ENCODE measurements at regions of chr12 and their contacts with region 1.

Region 1: GRCh38 chr12:21683115-21683514 is 25.5 kb upstream of the LDHB start:
- DNase-seq: no peak
- H3K4me3 ChIP-seq: no peak overlapping the region
- H3K27ac ChIP-seq: no peak overlapping the region
- H3K4me1 ChIP-seq: no peaks in the 10 kb centered on the region
- H3K27me3 ChIP-seq: no peaks in the 10 kb centered on the region
- CTCF ChIP-seq: no peak
- POLR2A ChIP-seq: no peak

Region 2: DNA sequence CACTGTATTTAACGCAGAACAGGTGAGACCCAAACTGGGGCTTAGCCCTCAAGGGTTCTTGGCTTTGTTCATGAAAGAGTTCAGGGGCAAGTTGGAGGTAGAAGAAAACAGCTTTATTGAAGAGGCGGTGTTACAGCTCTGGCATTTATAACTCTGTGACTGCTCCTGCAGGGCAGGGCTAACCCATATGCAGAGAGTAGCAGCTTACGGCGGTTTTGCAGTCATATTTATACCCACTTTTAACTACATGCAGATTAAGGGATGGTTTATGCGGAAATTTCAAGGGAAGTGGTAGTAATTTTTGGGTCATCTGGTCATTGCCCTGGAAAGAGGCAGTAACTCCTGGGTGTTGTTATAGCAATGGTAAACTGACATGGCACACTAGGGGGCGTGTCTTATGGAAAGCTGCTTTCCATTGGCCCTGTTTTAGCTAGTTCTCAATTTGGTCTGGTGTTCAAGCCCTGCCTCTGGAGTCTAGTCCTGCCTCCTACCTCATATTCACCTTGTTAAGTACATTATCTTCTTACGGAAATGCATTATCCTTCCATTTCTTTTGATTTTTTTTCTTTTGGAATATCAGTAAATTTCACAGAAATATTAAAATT is 312.2 kb before region 1 on chr12:
- intact Hi-C with region 1: no loop called
- DNase-seq: no peak
- H3K4me3 ChIP-seq: no peak overlapping the region
- H3K27ac ChIP-seq: no peak overlapping the region
- H3K4me1 ChIP-seq: no peaks in the 10 kb centered on the region
- H3K27me3 ChIP-seq: no peaks in the 10 kb centered on the region
- CTCF ChIP-seq: no peak
- POLR2A ChIP-seq: no peak

Region 3: GRCh38 chr12:21607701-21608100 is 75.4 kb before region 1 on chr12:
- intact Hi-C with region 1: loop called (anchors 10 kb)
- DNase-seq: no peak
- H3K4me3 ChIP-seq: no peak overlapping the region
- H3K27ac ChIP-seq: no peak overlapping the region
- H3K4me1 ChIP-seq: no peaks in the 10 kb centered on the region
- H3K27me3 ChIP-seq: no peaks in the 10 kb centered on the region
- CTCF ChIP-seq: peak in 3 of 4 experiments; percentile 17 to 52 (median 44)
- POLR2A ChIP-seq: no peak

Region 4: GRCh38 chr12:21725754-21726153 is 42.6 kb after region 1 on chr12:
- intact Hi-C with region 1: no loop called
- DNase-seq: peak; percentile 29
- H3K4me3 ChIP-seq: no peak overlapping the region
- H3K27ac ChIP-seq: peak overlapping the region in 1 of 2 donors; percentile 38
- H3K4me1 ChIP-seq: peaks cover 9% of the 10 kb centered on the region
- H3K27me3 ChIP-seq: no peaks in the 10 kb centered on the region
- CTCF ChIP-seq: no peak
- POLR2A ChIP-seq: no peak

Region 5: DNA sequence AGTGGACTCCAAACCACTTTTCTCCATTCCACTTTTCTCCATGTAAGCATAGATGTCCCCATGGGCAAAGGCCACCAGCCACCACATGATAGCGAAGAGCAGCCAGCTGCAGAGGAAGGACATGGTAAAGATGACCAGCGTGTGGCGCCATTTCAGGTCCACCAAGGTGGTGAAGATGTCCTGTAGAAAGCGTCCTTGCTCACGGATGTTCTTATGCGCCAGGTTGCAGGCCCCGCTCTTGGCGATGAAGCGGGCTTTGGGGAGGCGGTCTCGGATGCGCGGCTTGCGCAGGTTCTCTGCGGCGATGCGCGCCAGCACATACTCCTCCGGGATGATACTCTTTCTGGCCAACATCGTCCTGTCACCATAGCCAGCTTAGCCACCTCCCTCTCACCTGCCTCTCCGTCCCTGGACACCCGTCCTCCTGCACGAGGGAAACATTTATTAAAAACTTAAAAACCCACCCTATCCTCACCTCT is 90.2 kb after region 1 on chr12:
- intact Hi-C with region 1: no loop called
- DNase-seq: no peak
- H3K4me3 ChIP-seq: peak overlapping the region; percentile 42 to 45
- H3K27ac ChIP-seq: peak overlapping the region; percentile 51 to 76
- H3K4me1 ChIP-seq: no peaks in the 10 kb centered on the region
- H3K27me3 ChIP-seq: no peaks in the 10 kb centered on the region
- CTCF ChIP-seq: peak in 1 of 4 experiments; percentile 21
- POLR2A ChIP-seq: no peak

Measured in prostate gland (tissue), 2 donors.